CD8-positive, alpha-beta T cell (primary cell): ENCODE measurements at regions of chr1 and their contacts with region 1.

Region 1: GRCh38 chr1:226912587-226913176 is 27.4 kb upstream of the COQ8A start:
- DNase-seq: peak in 8 of 9 experiments; percentile 25 to 72 (median 46)
- ATAC-seq: peak; percentile 29
- H3K4me3 ChIP-seq: no peak overlapping the region
- H3K4me3 Mint-ChIP-seq: no peak overlapping the region
- H3K27ac ChIP-seq: no peak overlapping the region
- H3K27ac Mint-ChIP-seq: no peak overlapping the region
- H3K4me1 ChIP-seq: no peaks in the 10 kb centered on the region
- H3K4me1 Mint-ChIP-seq: no peaks in the 10 kb centered on the region
- H3K27me3 ChIP-seq: no peaks in the 10 kb centered on the region
- H3K27me3 Mint-ChIP-seq: no peaks in the 10 kb centered on the region
- CTCF ChIP-seq: no peak

Region 2: DNA sequence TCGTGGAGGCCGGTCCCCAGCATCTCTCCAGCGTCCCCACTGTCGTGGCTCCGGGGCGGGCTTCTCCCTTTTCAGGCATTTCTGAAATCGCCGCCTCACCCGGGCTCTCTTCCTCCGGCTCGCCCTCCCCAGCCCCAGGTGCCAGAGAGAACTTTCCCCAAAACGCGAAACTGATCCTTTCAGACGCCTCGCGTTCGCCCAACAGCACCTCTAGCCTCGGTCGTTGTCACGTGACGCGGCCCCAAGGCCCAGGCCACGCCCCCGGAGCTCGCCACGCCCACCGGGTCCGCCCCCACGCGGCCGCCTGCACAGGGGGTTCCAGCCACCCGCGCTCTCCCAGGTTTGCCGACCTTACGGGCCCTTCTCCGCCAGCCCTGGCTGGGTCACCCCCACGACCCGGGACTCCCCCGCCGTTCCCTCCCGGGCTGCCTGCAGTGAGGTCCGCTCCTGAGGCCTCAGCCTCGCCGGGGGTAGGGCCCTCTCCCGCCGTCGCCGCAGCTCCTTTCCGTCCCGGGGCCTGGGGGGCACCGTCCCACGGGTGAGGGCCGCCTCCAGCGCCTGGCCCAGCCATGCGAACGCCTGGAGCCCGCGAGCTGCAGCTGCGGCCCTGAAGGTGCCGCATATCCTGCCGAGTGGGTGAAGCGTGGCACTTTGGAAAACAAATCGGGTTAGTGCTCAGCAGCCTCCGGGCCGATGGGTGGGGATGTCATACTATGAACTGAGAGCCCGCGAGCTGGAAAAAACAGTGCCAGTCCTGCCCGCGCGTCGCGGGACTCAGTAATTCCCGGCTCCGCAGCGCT is 829.2 kb before region 1 on chr1:
- CTCF ChIA-PET with region 1: no interaction called
- POLR2A ChIA-PET with region 1: no interaction called
- intact Hi-C with region 1: no loop called
- DNase-seq: peak; percentile 80 to 97 (median 93)
- ATAC-seq: peak; percentile 97
- H3K4me3 ChIP-seq: peak overlapping the region; percentile 78 to 79
- H3K4me3 Mint-ChIP-seq: peak overlapping the region; percentile 90
- H3K27ac ChIP-seq: peak overlapping the region in 1 of 2 experiments; percentile 15
- H3K27ac Mint-ChIP-seq: peak overlapping the region; percentile 81
- H3K4me1 ChIP-seq: peaks cover 10% of the 10 kb centered on the region
- H3K4me1 Mint-ChIP-seq: peaks cover 11% of the 10 kb centered on the region
- H3K27me3 ChIP-seq: no peaks in the 10 kb centered on the region
- H3K27me3 Mint-ChIP-seq: no peaks in the 10 kb centered on the region
- CTCF ChIP-seq: no peak

Region 3: GRCh38 chr1:226892524-226892875 is 20.2 kb before region 1 on chr1:
- CTCF ChIA-PET with region 1: no interaction called
- POLR2A ChIA-PET with region 1: no interaction called
- intact Hi-C with region 1: no loop called
- DNase-seq: no peak
- ATAC-seq: no peak
- H3K4me3 ChIP-seq: no peak overlapping the region
- H3K4me3 Mint-ChIP-seq: no peak overlapping the region
- H3K27ac ChIP-seq: no peak overlapping the region
- H3K27ac Mint-ChIP-seq: no peak overlapping the region
- H3K4me1 ChIP-seq: no peaks in the 10 kb centered on the region
- H3K4me1 Mint-ChIP-seq: no peaks in the 10 kb centered on the region
- H3K27me3 ChIP-seq: no peaks in the 10 kb centered on the region
- H3K27me3 Mint-ChIP-seq: no peaks in the 10 kb centered on the region
- CTCF ChIP-seq: no peak

Region 4: GRCh38 chr1:227437495-227438008 is 524.9 kb after region 1 on chr1:
- CTCF ChIA-PET with region 1: no interaction called
- POLR2A ChIA-PET with region 1: no interaction called
- intact Hi-C with region 1: loop called in 1 of 2 experiments (anchors 5 kb)
- DNase-seq: peak in 2 of 9 experiments; percentile 20 to 42
- ATAC-seq: no peak
- H3K4me3 ChIP-seq: no peak overlapping the region
- H3K4me3 Mint-ChIP-seq: no peak overlapping the region
- H3K27ac ChIP-seq: no peak overlapping the region
- H3K27ac Mint-ChIP-seq: no peak overlapping the region
- H3K4me1 ChIP-seq: no peaks in the 10 kb centered on the region
- H3K4me1 Mint-ChIP-seq: peaks cover 2% of the 10 kb centered on the region
- H3K27me3 ChIP-seq: peaks cover 0 to 5% of the 10 kb centered on the region in 2 experiments
- H3K27me3 Mint-ChIP-seq: peaks cover 30% of the 10 kb centered on the region
- CTCF ChIP-seq: no peak